ENCODE measurements at regions of chr1 and their contacts with region 1.

Region 1: GRCh38 chr1:29202584-29203340 is 21.1 kb upstream of the SRSF4 start:
- DNase-seq: peak; percentile 96 to 98
- H3K4me3 ChIP-seq: no peak overlapping the region
- H3K27ac ChIP-seq: peak overlapping the region; percentile 82 to 99 (median 85)
- H3K4me1 ChIP-seq: peaks cover 10 to 13% of the 10 kb centered on the region in 2 donors
- H3K27me3 ChIP-seq: no peaks in the 10 kb centered on the region
- CTCF ChIP-seq: peak; percentile 77 to 97 (median 94)
- POLR2A ChIP-seq: peak in 1 of 2 donors; percentile 50

Region 2: DNA sequence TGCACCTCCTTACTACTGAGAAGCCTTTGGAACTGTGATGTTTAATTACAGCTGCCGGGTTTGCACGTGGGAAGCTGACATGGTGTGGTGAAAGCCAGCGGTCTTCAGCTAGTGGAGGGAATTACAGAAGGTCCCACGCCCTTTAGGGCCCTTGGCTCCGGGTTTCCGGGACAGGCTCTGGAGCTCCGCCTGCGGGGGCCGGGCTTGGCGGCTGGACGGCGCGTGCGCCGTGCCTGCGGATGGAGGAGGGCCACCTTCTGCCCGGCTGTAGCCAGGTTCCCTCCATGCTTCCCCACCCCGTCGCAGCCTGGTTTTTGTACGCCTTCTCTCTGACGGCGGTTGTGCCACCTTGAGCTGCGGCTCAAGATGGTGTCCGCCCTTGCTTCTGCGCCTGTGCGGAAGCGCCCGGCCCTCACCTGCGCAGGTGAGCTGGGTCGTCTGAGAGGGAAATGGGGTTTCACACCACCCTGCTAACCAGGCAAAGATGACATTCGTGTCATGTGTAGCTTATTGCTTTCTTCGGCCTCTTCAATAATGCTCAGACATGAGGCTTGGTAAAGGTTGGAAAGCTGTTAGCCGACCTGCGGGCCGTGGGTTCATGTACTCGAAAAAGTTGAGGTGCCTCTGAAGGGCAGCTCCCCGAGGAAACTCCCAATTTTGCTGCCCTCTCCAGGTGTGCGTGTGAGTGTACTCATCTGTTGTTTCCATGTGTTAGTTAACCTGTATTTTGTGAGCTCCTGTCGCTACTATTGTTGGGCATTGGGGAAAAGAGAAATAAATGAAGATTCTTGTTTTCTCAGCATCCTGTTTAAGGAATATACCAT is 427.4 kb before region 1 on chr1:
- intact Hi-C with region 1: loop called (anchors 10 kb)
- DNase-seq: peak; percentile 82 to 85
- H3K4me3 ChIP-seq: peak overlapping the region; percentile 5 to 31 (median 18)
- H3K27ac ChIP-seq: peak overlapping the region; percentile 36 to 52 (median 42)
- H3K4me1 ChIP-seq: peaks cover 4 to 14% of the 10 kb centered on the region in 2 donors
- H3K27me3 ChIP-seq: no peaks in the 10 kb centered on the region
- CTCF ChIP-seq: no peak
- POLR2A ChIP-seq: peak in 1 of 2 donors; percentile 79

Region 3: DNA sequence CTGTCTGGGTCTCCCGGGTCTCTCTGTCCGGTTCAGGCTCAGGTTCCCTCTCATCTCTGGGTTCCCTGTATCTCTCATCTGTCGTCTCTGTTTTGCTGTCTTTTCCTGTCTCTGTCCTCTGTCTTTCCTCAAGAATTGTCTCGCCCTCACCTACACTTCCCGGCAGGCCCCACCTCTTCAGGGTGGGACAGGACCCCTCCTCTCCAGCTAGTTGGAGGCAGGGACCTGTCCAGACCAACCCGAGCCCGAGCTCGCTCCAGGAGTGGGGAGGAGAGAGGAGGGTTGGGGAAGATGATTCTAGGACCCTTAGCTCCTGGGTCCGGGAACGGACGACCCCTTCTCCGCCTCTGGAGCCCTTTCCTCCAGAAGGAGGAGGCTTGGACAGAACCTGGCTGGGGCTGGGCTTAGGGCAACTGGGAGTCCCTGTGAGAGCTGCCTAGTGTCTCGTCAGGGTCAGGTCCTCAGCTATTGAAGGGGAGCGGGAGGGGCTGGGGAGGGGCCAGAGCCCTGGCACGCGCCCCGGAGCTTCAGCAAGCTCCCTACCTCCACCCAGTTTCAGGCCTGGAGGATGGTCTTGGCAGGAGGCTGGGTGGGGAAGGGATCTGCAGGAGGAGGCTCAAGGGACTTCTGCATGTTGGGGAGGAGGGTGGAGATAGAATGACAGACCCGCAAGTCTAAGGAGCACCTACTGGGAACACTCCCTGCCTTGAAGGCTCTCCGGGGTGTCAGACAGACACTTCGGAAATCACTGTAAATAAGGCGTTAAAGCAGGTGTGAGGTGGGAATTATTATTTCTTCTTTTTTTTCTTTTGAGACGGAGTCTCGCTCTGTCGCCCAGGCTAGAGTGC is 314.7 kb before region 1 on chr1:
- intact Hi-C with region 1: loop called (anchors 2 kb)
- DNase-seq: peak; percentile 71 to 83
- H3K4me3 ChIP-seq: peak overlapping the region; percentile 40 to 97 (median 86)
- H3K27ac ChIP-seq: peak overlapping the region in 2 of 3 donors; percentile 36 to 77
- H3K4me1 ChIP-seq: peaks cover 20 to 34% of the 10 kb centered on the region in 2 donors
- H3K27me3 ChIP-seq: no peaks in the 10 kb centered on the region
- CTCF ChIP-seq: no peak
- POLR2A ChIP-seq: peak in 1 of 2 donors; percentile 33

Region 4: GRCh38 chr1:29033829-29034466 is 168.8 kb before region 1 on chr1:
- intact Hi-C with region 1: loop called (anchors 10 kb)
- DNase-seq: no peak
- H3K4me3 ChIP-seq: no peak overlapping the region
- H3K27ac ChIP-seq: no peak overlapping the region
- H3K4me1 ChIP-seq: no peaks in the 10 kb centered on the region
- H3K27me3 ChIP-seq: no peaks in the 10 kb centered on the region
- CTCF ChIP-seq: peak in 4 of 6 experiments; percentile 44 to 79 (median 66)
- POLR2A ChIP-seq: no peak

Region 5: GRCh38 chr1:29332204-29332603 is 129.4 kb after region 1 on chr1:
- intact Hi-C with region 1: no loop called
- DNase-seq: no peak
- H3K4me3 ChIP-seq: no peak overlapping the region
- H3K27ac ChIP-seq: no peak overlapping the region
- H3K4me1 ChIP-seq: no peaks in the 10 kb centered on the region
- H3K27me3 ChIP-seq: no peaks in the 10 kb centered on the region
- CTCF ChIP-seq: peak in 2 of 6 experiments; percentile 7 to 10
- POLR2A ChIP-seq: no peak